Thyroid gland (tissue), 4 donors: ENCODE measurements at regions of chr19 and their contacts with region 1.

Region 1: GRCh38 chr19:7903244-7904073 is at the start of gene MAP2K7:
- DNase-seq: peak; percentile 100
- H3K4me3 ChIP-seq: peak within 1 kb of the TSS; percentile 76 to 91 (median 89)
- H3K27ac ChIP-seq: peak within 1 kb of the TSS; percentile 70 to 86 (median 71)
- H3K4me1 ChIP-seq: peaks cover 23 to 25% of the 10 kb centered on the region in 2 donors
- H3K27me3 ChIP-seq: no peaks in the 10 kb centered on the region
- CTCF ChIP-seq: peak in 4 of 6 experiments; percentile 3 to 71 (median 44)
- POLR2A ChIP-seq: peak; percentile 42 to 84
- total RNA-seq, gene MAP2K7: 9.1 to 18.6 (median 14.9) TPM

Region 2: GRCh38 chr19:7833225-7834156 is 70.0 kb before region 1 on chr19:
- intact Hi-C with region 1: no loop called
- DNase-seq: peak; percentile 92 to 95
- H3K4me3 ChIP-seq: no peak overlapping the region
- H3K27ac ChIP-seq: no peak overlapping the region
- H3K4me1 ChIP-seq: peaks cover 10 to 25% of the 10 kb centered on the region in 2 donors
- H3K27me3 ChIP-seq: no peaks in the 10 kb centered on the region
- CTCF ChIP-seq: no peak
- POLR2A ChIP-seq: no peak

Region 3: DNA sequence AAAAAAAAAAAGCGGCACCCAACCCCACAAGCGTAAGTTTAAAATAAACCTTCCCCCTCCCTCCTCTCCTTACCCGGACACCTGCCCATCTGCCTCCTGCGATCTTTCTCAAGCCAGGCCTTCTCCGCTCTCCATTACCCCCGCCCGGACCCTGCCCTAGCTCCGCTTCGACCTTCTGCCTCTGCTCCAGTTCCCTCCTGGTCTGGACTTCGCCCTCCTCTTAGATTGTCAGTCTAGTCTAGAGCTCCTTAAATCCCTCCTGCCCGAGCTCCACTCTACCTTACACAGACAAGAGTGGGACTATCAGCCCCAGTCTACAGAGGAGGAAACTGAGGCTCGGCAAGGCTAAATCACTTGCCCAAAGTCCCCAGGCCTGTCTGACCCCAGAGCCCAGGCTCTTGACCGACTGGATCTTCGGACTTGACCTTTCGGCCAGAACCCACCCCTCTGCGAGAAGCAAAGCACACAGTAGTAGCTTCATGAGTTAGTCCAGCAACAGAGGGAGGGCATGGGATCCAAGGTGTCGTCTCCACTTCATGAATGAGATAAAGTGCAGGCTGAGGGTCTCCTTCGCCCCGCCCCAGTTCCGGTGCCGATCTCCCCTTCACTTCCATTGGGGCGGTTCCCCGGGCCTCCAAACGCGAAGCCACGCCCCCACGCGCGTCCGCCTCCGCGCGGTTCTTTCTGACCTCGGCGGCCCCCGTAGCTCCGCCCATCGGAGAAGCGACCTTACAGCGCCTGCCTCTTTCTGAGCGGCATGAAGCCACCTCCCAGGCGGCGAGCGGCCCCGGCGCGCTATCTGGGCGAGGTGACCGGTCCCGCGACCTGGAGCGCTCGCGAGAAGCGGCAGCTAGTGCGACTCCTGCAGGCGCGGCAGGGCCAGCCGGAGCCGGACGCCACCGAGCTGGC is 16.4 kb after region 1 on chr19 and contains the start of gene SNAPC2:
- intact Hi-C with region 1: loop called (anchors 2 kb)
- DNase-seq: peak; percentile 97 to 98
- H3K4me3 ChIP-seq: peak within 1 kb of the TSS; percentile 35 to 98 (median 67)
- H3K27ac ChIP-seq: peak within 1 kb of the TSS; percentile 78 to 92 (median 88)
- H3K4me1 ChIP-seq: peaks cover 9 to 49% of the 10 kb centered on the region in 2 donors
- H3K27me3 ChIP-seq: peaks cover 4% of the 10 kb centered on the region
- CTCF ChIP-seq: peak in 1 of 6 experiments; percentile 16
- POLR2A ChIP-seq: peak in 1 of 2 donors; percentile 63
- total RNA-seq, gene SNAPC2: 9.3 to 14.0 (median 11.5) TPM